WTC11 (cell line): ENCODE measurements at regions of chr4 and their contacts with region 1.

Region 1: DNA sequence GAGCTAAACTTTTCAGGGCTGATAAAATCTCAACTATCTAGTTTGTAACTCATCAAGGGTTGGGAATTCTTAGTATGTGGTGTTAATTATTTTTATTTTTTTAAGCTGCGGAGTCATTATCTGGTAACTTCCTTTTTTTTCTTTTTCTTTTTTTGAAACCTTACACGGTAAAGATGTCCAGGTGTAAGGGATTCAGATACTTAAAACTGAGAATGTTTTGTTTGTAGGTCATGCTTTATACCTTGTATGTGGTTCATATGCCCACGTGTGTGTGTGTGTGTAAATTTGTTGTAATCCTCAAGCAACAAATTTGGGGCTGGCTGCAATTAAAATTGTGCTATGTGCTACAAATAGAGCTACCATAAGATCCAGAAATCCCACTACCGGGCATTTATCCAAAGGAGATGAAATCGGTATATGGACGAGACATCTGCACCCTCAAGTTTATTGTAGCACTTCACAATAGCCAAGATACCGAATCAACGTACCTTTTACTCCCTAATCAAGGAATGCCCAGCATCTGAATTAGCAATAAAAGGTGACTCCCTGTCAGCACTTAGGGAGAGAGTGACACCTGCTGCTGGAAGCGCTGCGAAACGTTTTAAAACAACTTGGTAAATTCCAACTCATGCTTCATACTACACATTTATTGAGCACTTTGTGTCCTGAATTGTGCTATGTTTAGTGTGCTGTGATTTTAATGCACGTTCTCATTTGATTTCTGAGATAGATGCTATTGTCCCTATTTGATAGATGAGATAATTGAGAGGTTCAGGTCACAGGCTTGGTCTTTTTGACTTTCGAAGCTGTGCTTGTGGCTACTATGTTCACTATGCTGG is 16.1 kb downstream of the MSMO1 start:
- DNase-seq: no peak
- ATAC-seq: peak; percentile 70
- H3K4me3 Mint-ChIP-seq: no peak overlapping the region
- H3K27ac Mint-ChIP-seq: 0 out of 2 replicates have a peak overlapping the region, but pooled peaks have one; percentile 70
- H3K4me1 Mint-ChIP-seq: no peaks in the 10 kb centered on the region
- H3K27me3 Mint-ChIP-seq: no peaks in the 10 kb centered on the region
- CTCF ChIP-seq: no peak

Region 2: GRCh38 chr4:165355900-165356300 is 12.3 kb after region 1 on chr4:
- CTCF ChIA-PET with region 1: interaction called, 10 read pairs
- POLR2A ChIA-PET with region 1: no interaction called
- DNase-seq: peak; percentile 63
- ATAC-seq: peak; percentile 87
- H3K4me3 Mint-ChIP-seq: no peak overlapping the region
- H3K27ac Mint-ChIP-seq: no peak overlapping the region
- H3K4me1 Mint-ChIP-seq: 0 out of 2 replicates have a peak, but pooled peaks cover 2% of the 10 kb centered on the region
- H3K27me3 Mint-ChIP-seq: no peaks in the 10 kb centered on the region
- CTCF ChIP-seq: no peak

Region 3: GRCh38 chr4:165369522-165369921 is 25.9 kb after region 1 on chr4:
- CTCF ChIA-PET with region 1: no interaction called
- POLR2A ChIA-PET with region 1: no interaction called
- DNase-seq: no peak
- ATAC-seq: no peak
- H3K4me3 Mint-ChIP-seq: no peak overlapping the region
- H3K27ac Mint-ChIP-seq: no peak overlapping the region
- H3K4me1 Mint-ChIP-seq: peaks cover 16% of the 10 kb centered on the region
- H3K27me3 Mint-ChIP-seq: no peaks in the 10 kb centered on the region
- CTCF ChIP-seq: no peak